GM10248 (cell line): ENCODE measurements at regions of chr6 and their contacts with region 1.

Region 1: DNA sequence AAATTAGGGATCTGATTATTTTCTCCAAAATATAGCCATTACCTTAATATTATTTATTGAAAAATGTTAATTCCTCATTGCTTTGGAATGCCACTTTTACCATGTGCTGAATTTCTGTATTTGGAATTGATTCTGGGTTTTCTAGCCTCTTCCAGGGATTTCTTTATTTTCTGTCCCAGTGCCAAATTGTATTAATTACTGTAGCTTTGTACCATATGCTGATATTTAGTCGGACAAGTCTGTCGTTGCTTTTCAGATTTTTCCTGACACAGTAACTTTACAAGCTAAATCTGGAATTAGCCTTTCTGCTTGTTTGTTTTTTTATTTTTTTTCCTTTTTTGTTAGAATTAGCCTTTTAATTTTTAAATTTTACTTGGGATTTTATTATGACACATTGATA is 10.9 kb upstream of the TMEM14B start:
- DNase-seq: no peak
- CTCF ChIP-seq: no peak

Region 2: DNA sequence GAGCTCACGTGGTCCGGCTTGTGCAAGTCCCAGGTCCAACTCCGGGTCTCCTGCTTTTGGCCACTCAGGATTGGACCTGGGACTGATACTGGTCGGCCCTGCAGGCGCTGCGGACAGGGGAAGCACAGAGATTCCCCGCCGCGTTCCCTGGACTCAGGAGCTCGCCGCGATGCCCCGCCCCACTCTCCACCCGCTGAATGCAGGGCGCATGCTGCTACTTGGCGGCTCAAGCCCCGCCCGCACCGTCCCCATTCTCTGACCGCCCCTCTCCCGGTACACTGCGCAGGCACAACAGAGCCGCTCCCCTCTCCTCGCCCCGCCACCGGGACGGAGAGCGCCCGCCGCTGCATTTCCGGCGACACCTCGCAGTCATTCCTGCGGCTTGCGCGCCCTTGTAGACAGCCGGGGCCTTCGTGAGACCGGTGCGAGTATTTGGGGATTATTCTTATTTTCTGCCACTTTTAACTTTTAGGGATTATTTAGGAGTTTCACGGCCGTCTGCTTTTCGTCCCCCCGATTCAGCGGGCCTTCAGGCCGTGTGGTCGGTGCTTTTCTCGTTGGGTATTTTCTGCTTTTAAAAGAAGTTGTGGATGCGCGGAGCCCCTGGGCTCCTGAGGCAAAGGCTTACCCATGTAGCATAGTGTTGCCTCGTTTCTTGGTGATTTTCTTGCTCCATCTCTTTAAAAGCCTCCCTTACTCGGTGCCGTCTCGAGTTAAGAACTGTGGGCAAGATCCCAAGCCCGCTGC is 13.7 kb before region 1 on chr6 and contains the start of gene TMEM14C:
- CTCF ChIA-PET with region 1: interaction called, 11 read pairs
- POLR2A ChIA-PET with region 1: no interaction called
- DNase-seq: peak; percentile 97
- CTCF ChIP-seq: no peak

Region 3: DNA sequence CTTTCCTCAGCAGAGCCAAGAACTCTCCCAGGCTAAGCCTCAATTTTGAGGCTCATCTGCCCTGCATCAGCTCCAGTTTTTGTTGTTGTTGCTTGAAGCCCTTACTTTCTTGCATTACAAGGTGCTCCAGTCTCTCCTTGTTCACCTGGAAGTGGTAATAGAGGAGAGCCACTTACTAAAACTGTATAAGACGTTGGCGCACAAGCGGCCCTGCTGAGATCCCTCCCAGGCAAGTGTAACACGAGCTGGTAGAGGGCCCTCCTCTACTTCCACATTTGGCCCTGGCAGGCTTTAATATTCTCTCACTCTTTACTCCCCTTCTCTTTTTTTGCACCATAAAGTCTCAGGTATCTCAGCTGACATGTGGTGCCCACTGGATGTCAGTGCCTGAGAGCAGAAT is 125.6 kb after region 1 on chr6:
- CTCF ChIA-PET with region 1: no interaction called
- POLR2A ChIA-PET with region 1: no interaction called
- DNase-seq: no peak
- CTCF ChIP-seq: no peak

Region 4: DNA sequence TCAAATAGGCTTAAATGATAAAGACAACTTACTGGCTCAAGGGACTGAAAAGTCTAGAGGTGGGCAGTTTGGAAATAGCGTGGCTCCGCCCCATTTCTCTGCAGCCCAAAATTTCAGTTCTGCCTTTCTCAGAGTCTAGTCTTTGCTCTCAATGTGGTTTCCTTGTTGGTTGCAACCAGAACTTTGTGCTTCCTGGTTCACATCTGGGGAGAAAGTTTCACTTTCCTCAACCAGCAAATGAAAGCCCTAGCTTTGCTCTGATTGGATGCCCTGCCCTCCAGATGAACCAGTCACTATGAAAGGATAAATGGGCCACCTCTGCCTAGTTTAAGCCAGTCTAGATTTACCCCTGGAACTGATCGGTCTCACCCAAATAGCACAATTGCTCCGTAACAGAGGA is 165.0 kb after region 1 on chr6:
- CTCF ChIA-PET with region 1: no interaction called
- POLR2A ChIA-PET with region 1: no interaction called
- DNase-seq: peak; percentile 71
- CTCF ChIP-seq: no peak